Posterior cingulate gyrus (tissue), 11 donors: ENCODE measurements at regions of chr6 and their contacts with region 1.

Region 1: DNA sequence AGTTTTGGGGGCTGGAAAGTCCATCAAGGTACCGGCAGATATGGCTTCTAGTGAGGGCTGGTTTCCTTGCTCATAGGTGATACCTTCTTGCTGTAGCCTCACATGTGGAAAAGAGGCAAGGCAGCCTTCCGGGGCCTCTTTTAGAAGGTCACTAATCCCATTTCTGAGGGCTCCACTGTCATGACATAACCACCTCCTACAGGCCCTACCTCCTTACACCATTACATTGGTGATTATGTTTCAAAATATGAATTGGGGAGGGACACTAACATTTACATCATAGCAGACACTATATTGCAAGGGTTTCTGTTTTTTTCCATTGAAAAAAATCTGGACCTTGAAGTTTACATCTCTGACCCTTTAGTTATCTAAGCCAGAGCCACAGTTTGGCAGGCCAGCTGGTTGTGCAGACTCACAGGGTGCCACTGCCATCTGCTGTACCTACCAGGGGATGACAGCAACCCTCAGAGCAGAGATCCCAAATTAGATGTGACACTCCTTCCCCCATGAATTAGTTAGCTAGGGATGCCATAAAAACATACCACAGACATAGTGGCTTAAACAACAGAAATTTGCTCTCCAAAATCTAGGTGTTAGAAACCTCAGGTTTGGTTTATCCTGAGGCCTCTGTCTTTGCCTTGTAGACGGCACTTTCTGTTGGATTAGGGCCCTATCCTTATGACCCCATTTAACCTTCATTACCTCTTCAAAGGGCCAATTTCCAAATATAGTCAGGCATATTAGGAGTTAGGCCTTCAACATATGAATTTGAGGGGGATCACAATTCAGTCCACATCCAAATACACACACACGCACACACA is 166.4 kb upstream of the RNF217 start:
- DNase-seq: peak; percentile 42 to 94 (median 58)

Region 2: GRCh38 chr6:123415844-123416468 is 1379.9 kb before region 1 on chr6:
- intact Hi-C with region 1: loop called (anchors 2 kb)
- DNase-seq: peak in 5 of 10 donors; percentile 26 to 64 (median 59)

Region 3: GRCh38 chr6:123777563-123777962 is 1018.3 kb before region 1 on chr6:
- intact Hi-C with region 1: loop called (anchors 10 kb)
- DNase-seq: no peak

Region 4: GRCh38 chr6:123802697-123803496 is 993.0 kb before region 1 on chr6:
- intact Hi-C with region 1: loop called (anchors 5 kb)
- DNase-seq: peak; percentile 83 to 98 (median 90)

Region 5: DNA sequence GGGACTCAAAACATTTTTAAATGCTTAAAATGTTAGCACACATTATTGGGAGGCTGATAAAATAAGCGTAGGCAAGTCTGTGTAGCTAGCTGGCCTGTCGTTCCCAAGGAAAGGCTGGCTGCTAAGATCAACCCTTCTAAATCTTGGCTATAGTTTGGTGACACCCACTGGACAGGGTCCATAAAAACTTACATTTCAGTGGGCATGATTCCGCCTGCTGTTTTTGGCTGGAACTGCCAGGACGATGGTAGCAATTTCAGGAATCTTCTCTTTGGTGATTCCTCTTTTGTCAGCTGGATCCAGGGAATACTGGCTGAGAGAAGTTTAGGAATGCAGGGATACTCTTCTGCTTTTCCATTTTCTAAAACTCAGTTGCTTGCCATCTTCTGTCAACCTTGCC is 830.0 kb before region 1 on chr6:
- intact Hi-C with region 1: loop called (anchors 10 kb)
- DNase-seq: peak in 2 of 10 donors; percentile 40 to 70

Region 6: DNA sequence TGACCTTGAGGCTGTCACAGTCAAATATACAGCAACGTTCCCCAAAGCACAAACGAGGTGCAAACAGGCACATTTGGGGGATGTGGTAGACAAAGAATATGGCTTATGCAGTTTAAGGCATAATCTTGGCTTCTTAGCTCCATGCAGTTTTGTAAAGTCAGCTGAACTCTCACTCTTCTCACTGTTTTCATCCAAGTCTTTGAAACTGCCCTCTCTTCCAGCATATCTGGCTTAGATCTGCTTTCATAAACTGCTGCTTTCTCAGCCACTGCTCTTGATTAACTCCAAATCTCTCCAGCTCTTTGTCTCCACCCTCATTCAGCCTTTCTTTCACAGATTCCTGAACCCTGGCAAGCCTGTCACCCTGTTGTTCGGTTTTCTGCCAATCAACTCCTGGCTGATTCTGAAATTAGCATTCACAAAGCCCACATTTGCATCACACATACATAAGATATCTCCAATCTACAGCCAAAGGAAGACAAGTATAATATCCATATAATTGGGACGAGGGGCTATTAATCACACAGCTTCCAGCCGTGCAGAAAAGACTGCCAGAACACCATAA is 134.7 kb before region 1 on chr6:
- intact Hi-C with region 1: no loop called
- DNase-seq: no peak

Region 7: DNA sequence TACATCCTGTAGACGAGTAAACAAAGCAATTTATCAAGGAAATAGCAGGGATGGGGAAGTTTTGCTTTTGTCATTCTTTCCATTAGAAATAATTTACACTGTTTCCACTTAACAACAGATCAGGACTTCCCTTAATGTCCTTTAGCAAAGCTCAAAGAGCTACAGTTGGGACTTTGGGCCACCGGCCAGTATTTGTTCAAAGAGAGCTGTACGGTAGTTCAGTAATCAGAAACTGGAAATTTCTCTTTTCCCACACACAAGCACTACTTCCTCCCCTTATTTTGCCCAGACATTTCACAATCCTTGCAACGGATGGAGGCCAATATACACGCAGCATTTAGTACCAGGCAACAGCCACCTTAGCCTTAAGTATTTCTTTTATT is 1148.6 kb after region 1 on chr6:
- intact Hi-C with region 1: no loop called
- DNase-seq: peak in 6 of 10 donors; percentile 20 to 83 (median 48)